ENCODE measurements at regions of chr10 and their contacts with region 1.

Region 1: GRCh38 chr10:3924344-3924743 is 139.3 kb upstream of the KLF6 start:
- DNase-seq: peak; percentile 98
- H3K4me3 ChIP-seq: no peak overlapping the region
- H3K27ac ChIP-seq: peak overlapping the region; percentile 99
- H3K4me1 ChIP-seq: peaks cover 29% of the 10 kb centered on the region
- H3K27me3 ChIP-seq: no peaks in the 10 kb centered on the region
- CTCF ChIP-seq: no peak
- POLR2A ChIP-seq: peak; percentile 32

Region 2: DNA sequence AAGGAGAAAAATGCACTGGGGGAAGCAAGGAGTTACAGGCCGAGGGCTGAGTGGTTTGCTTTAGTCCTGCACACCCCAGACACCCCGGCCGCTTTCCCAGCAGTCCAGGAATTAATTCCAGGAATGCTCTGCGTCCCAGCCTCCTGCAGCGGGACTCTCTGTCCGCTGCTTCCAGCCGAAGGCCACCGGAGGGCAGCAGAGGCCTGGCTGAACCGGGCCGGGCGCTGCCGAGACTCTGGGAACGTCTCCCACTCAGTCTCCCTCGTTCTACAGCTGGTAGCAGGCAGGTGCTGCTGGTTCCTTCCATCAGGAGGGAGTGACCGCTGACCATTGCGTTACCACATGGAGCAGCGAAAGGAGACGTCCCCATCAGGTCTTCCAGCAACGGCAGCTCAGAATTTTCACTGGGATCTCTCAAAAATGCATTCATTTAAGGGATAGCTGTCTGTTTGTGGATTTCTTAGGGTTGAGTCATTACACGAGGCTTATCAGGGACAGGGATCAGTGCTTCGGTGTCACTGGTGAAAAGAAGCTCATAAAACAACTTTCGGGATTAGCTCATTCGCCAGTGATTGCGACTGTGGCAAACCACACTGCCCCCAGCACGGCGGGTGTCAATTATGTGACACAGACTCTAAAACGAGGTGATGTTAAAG is 726.9 kb before region 1 on chr10:
- CTCF ChIA-PET with region 1: no interaction called
- POLR2A ChIA-PET with region 1: no interaction called
- dilution Hi-C with region 1: no loop called
- intact Hi-C with region 1: loop called (anchors 10 kb)
- DNase-seq: peak; percentile 86
- H3K4me3 ChIP-seq: peak overlapping the region in 2 of 3 experiments; percentile 1 to 6
- H3K27ac ChIP-seq: no peak overlapping the region
- H3K4me1 ChIP-seq: peaks cover 12% of the 10 kb centered on the region
- H3K27me3 ChIP-seq: peaks cover 0 to 6% of the 10 kb centered on the region in 2 experiments
- CTCF ChIP-seq: peak; percentile 93 to 96
- POLR2A ChIP-seq: no peak

Region 3: GRCh38 chr10:3811291-3811870 is 113.0 kb before region 1 on chr10:
- CTCF ChIA-PET with region 1: no interaction called
- POLR2A ChIA-PET with region 1: no interaction called
- dilution Hi-C with region 1: no loop called
- intact Hi-C with region 1: loop called (anchors 1 kb)
- DNase-seq: peak; percentile 70
- H3K4me3 ChIP-seq: no peak overlapping the region
- H3K27ac ChIP-seq: peak overlapping the region; percentile 100
- H3K4me1 ChIP-seq: peaks cover 55% of the 10 kb centered on the region
- H3K27me3 ChIP-seq: no peaks in the 10 kb centered on the region
- CTCF ChIP-seq: no peak
- POLR2A ChIP-seq: peak; percentile 28

Region 4: DNA sequence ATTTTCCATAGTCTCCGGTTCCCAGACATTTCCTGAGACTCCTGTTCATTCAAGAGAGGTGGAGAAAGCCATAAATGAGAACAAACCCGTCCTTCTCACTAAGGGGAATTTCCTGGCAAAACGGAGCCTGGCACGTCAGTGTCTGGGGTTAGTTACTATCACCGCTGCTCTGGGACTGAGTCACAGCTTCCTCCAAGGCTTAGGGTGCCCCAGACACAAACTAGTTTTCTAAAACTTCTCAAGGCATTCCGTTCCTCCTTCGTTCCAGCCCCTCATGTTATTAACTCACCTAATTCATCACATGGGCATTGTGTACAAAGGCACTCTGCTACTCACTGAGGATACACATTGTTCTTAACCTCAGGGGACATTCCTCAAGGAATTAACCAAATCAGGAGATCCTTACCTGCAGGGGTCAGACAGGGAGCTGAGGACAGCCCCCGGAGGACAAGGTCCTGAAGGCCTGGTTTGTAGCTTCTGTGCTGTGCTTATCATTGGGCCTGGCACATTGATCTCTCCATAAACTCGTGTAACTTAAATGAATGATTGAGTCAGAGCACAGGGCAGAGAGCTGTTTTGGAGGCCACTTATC is 36.4 kb before region 1 on chr10:
- CTCF ChIA-PET with region 1: interaction called, 3 read pairs
- POLR2A ChIA-PET with region 1: interaction called, 3 read pairs
- dilution Hi-C with region 1: no loop called
- intact Hi-C with region 1: loop called (anchors 1 kb)
- DNase-seq: peak; percentile 97
- H3K4me3 ChIP-seq: peak overlapping the region in 1 of 3 experiments; percentile 22
- H3K27ac ChIP-seq: peak overlapping the region; percentile 100
- H3K4me1 ChIP-seq: peaks cover 56% of the 10 kb centered on the region
- H3K27me3 ChIP-seq: no peaks in the 10 kb centered on the region
- CTCF ChIP-seq: no peak
- POLR2A ChIP-seq: peak; percentile 65

Region 5: GRCh38 chr10:4043897-4044665 is 119.7 kb after region 1 on chr10:
- CTCF ChIA-PET with region 1: no interaction called
- POLR2A ChIA-PET with region 1: no interaction called
- dilution Hi-C with region 1: no loop called
- intact Hi-C with region 1: loop called (anchors 1 kb)
- DNase-seq: peak; percentile 97
- H3K4me3 ChIP-seq: no peak overlapping the region
- H3K27ac ChIP-seq: peak overlapping the region; percentile 66
- H3K4me1 ChIP-seq: peaks cover 21% of the 10 kb centered on the region
- H3K27me3 ChIP-seq: no peaks in the 10 kb centered on the region
- CTCF ChIP-seq: no peak
- POLR2A ChIP-seq: peak; percentile 67

Region 6: DNA sequence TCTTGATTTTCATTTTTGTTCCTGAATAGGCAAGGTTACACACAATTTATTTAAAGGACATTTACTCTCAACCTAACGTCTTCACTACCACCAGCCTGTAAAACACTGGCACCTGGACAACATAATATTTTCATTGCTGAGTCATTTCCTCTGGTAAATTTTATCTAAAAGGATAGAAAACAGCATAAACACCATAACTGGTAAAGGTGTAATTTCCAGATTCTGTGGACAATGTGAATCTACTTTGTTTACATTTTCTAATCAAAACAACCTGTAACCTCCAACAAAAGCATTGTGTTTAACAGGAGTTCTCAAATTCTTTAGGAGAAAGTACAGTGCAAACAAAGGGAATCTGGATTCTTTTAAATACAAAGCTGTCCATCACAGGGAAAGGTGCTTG is 429.6 kb after region 1 on chr10:
- CTCF ChIA-PET with region 1: no interaction called
- POLR2A ChIA-PET with region 1: no interaction called
- dilution Hi-C with region 1: no loop called
- intact Hi-C with region 1: loop called (anchors 1 kb)
- DNase-seq: peak; percentile 96
- H3K4me3 ChIP-seq: no peak overlapping the region
- H3K27ac ChIP-seq: peak overlapping the region; percentile 94
- H3K4me1 ChIP-seq: peaks cover 46% of the 10 kb centered on the region
- H3K27me3 ChIP-seq: no peaks in the 10 kb centered on the region
- CTCF ChIP-seq: no peak
- POLR2A ChIP-seq: no peak

Region 7: GRCh38 chr10:4656576-4657182 is 732.3 kb after region 1 on chr10:
- CTCF ChIA-PET with region 1: interaction called, 5 read pairs
- POLR2A ChIA-PET with region 1: no interaction called
- dilution Hi-C with region 1: no loop called
- intact Hi-C with region 1: loop called (anchors 1 kb)
- DNase-seq: peak; percentile 80
- H3K4me3 ChIP-seq: no peak overlapping the region
- H3K27ac ChIP-seq: peak overlapping the region; percentile 47
- H3K4me1 ChIP-seq: peaks cover 4% of the 10 kb centered on the region
- H3K27me3 ChIP-seq: no peaks in the 10 kb centered on the region
- CTCF ChIP-seq: peak; percentile 77 to 82
- POLR2A ChIP-seq: no peak

Measured in endothelial cell of umbilical vein (primary cell).